Activated CD4-positive, alpha-beta T cell treated with anti-CD3 and anti-CD28 coated beads for 36 hours (primary cell): ENCODE measurements at regions of chr1 and their contacts with region 1.

Region 1: GRCh38 chr1:151047925-151048645 is 534 bp downstream of the C1orf56 start:
- DNase-seq: peak; percentile 75
- ATAC-seq: peak; percentile 80
- H3K4me3 Mint-ChIP-seq: peak overlapping the region; percentile 84
- H3K27ac Mint-ChIP-seq: peak overlapping the region; percentile 86
- H3K4me1 Mint-ChIP-seq: peaks cover 55% of the 10 kb centered on the region
- H3K27me3 Mint-ChIP-seq: no peaks in the 10 kb centered on the region

Region 2: GRCh38 chr1:151024540-151025146 is 23.4 kb before region 1 on chr1:
- CTCF ChIA-PET with region 1: interaction called, 15 read pairs
- POLR2A ChIA-PET with region 1: no interaction called
- intact Hi-C with region 1: no loop called
- DNase-seq: peak; percentile 91
- ATAC-seq: peak; percentile 100
- H3K4me3 Mint-ChIP-seq: peak overlapping the region; percentile 30
- H3K27ac Mint-ChIP-seq: peak overlapping the region; percentile 65
- H3K4me1 Mint-ChIP-seq: peaks cover 5% of the 10 kb centered on the region
- H3K27me3 Mint-ChIP-seq: no peaks in the 10 kb centered on the region

Region 3: GRCh38 chr1:151032164-151032563 is 15.9 kb before region 1 on chr1:
- CTCF ChIA-PET with region 1: interaction called, 11 read pairs
- POLR2A ChIA-PET with region 1: no interaction called
- intact Hi-C with region 1: no loop called
- DNase-seq: no peak
- ATAC-seq: no peak
- H3K4me3 Mint-ChIP-seq: no peak overlapping the region
- H3K27ac Mint-ChIP-seq: no peak overlapping the region
- H3K4me1 Mint-ChIP-seq: peaks cover 3% of the 10 kb centered on the region
- H3K27me3 Mint-ChIP-seq: no peaks in the 10 kb centered on the region

Region 4: GRCh38 chr1:151059078-151059907 is 11.2 kb after region 1 on chr1 and contains the start of gene CDC42SE1:
- CTCF ChIA-PET with region 1: interaction called, 34 read pairs
- POLR2A ChIA-PET with region 1: interaction called, 6 read pairs
- intact Hi-C with region 1: loop called (anchors 1 kb)
- DNase-seq: peak; percentile 92
- ATAC-seq: peak; percentile 75
- H3K4me3 Mint-ChIP-seq: peak within 1 kb of the TSS; percentile 93
- H3K27ac Mint-ChIP-seq: peak within 1 kb of the TSS; percentile 98
- H3K4me1 Mint-ChIP-seq: peaks cover 54% of the 10 kb centered on the region
- H3K27me3 Mint-ChIP-seq: no peaks in the 10 kb centered on the region
- total RNA-seq, gene CDC42SE1: 95.4 to 101 TPM

Region 5: DNA sequence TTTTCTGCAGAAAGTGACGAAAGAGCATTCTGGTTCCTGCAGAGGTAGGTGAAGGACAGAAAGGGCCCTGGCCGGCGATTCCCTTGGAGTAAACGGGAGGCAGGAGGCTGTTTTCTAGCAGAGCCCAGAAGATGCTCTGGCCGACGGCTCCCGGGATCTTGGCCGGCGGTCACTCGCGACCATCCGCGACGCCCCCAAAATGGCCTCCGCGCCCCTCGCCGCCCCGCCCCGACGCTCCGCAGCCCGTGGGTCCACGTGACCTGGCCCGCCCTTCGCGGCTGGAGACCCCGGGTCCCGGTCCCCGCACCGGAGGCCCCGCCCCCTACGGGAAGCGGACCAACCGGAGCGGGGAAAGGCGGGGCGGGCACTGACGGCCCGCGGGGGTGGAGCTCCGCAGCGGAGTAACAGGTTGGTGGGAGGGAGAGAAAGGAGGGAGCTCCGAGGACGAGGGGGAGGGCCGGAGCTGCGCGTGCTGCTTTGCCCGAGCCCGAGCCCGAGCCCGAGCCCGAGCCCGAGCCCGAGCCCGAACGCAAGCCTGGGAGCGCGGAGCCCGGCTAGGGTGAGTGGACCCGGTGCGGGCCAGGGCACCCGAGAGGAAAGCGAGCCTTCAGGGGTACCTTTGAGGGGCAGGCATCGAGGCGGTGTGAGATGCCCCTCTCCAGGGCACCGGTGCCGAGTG is 463.0 kb after region 1 on chr1 and contains the start of gene CGN:
- CTCF ChIA-PET with region 1: no interaction called
- POLR2A ChIA-PET with region 1: no interaction called
- intact Hi-C with region 1: no loop called
- DNase-seq: peak; percentile 91
- ATAC-seq: peak; percentile 98
- H3K4me3 Mint-ChIP-seq: peak within 1 kb of the TSS; percentile 80
- H3K27ac Mint-ChIP-seq: peak within 1 kb of the TSS; percentile 47
- H3K4me1 Mint-ChIP-seq: peaks cover 23% of the 10 kb centered on the region
- H3K27me3 Mint-ChIP-seq: no peaks in the 10 kb centered on the region
- total RNA-seq, gene CGN: 0.67 to 1.4 TPM